ENCODE measurements at regions of chr18 and their contacts with region 1.

Region 1: GRCh38 chr18:4599312-4599711 is 144.2 kb upstream of the DLGAP1 start:
- DNase-seq: no peak
- H3K4me3 Mint-ChIP-seq: no peak overlapping the region
- H3K27ac Mint-ChIP-seq: no peak overlapping the region
- H3K4me1 Mint-ChIP-seq: no peaks in the 10 kb centered on the region
- H3K27me3 Mint-ChIP-seq: no peaks in the 10 kb centered on the region

Region 2: GRCh38 chr18:4549164-4549860 is 50.0 kb before region 1 on chr18:
- intact Hi-C with region 1: loop called (anchors 1 kb)
- DNase-seq: no peak
- H3K4me3 Mint-ChIP-seq: no peak overlapping the region
- H3K27ac Mint-ChIP-seq: no peak overlapping the region
- H3K4me1 Mint-ChIP-seq: no peaks in the 10 kb centered on the region
- H3K27me3 Mint-ChIP-seq: no peaks in the 10 kb centered on the region